Left cardiac atrium (tissue), 4 donors: ENCODE measurements at regions of chr14 and their contacts with region 1.

Region 1: GRCh38 chr14:60724137-60724619 is at the start of gene SIX4:
- DNase-seq: peak; percentile 68
- ATAC-seq: peak; percentile 89 to 90
- total RNA-seq, gene SIX4: 3.3 to 3.8 TPM

Region 2: GRCh38 chr14:60679566-60680258 is 44.5 kb before region 1 on chr14:
- intact Hi-C with region 1: loop called in 1 of 2 experiments (anchors 5 kb)
- DNase-seq: no peak
- ATAC-seq: no peak

Region 3: DNA sequence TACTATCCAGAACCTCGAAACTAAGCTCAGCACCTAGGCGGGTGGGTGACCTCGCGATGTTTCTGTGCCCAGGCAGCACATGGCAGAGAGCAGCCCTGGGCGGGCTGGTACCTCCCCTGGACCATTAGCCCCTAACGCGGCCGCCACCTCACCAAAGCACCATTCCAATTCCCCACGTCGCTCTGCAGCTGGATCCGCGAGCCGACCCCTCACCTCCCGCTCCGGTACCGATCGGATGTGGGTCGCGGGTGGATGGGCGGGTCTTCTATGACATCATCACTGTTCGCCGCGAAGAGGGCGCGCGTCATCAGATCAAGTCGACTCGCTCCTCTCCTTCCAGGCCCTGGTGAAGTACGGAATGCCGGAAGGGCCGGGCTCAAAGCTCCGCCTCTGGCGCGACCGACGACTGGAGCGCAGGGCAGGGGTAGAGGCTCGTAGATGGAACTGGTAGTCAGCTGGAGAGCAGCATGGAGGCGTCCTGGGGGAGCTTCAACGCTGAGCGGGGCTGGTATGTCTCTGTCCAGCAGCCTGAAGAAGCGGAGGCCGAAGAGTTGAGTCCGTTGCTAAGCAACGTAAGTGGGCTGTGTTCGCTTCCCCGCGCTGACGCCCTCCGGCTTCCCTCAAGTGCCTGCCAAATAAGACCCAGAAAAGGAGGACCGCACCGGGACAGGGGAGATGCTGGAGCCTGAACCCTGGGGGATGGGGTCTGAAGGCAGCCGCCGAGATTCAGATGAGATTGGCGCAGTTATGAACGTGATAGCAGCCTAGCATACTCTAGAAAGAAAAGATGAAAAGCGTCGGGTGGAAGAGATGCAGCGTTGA is 256.8 kb after region 1 on chr14 and contains the starts of genes SLC38A6 and TRMT5:
- intact Hi-C with region 1: loop called in 1 of 2 experiments (anchors 10 kb)
- DNase-seq: peak; percentile 95
- ATAC-seq: peak; percentile 97 to 98
- total RNA-seq, gene SLC38A6: 5.9 to 9.0 TPM
- total RNA-seq, gene TRMT5: 8.3 to 9.8 TPM